Posterior vena cava (tissue), 2 donors: ENCODE measurements at regions of chr1 and their contacts with region 1.

Region 1: DNA sequence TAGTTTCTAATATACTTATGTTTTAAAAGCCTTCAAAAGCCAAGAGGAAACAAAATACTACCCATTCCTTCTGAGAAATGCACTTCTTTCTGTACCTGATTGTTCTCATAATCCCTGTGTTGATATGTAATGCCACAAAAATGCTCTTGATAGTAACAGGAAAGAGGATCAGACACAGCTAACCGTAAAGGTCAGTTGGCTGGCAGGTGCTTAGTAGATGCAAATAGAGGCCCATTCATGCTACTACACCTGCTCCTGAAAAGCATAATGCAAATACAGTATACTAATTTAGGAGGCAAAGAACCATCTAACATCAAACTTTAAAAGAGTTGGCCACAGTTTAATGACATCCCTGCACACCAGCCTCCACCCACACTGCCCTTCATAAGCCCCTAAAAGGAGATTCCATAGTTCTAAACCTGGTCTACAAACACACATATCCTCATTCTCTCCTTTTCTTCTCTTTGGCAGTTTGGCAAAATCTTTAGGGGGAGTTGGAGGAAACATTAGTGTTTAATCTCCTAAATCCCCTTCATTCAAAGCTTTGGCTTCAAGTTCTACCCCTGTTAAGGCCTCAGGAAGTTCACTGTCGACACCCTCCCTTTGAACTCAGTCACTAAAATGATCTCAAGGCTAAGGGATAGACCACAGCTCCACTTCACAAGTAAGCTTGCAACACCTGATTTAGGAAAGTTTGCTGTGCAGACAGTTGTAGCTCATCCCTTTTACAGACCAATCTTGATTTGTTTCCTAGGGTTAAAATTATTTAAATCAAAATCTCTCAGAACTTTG is 2.9 kb upstream of the CD46 start:
- DNase-seq: no peak

Region 2: GRCh38 chr1:206839857-206840256 is 909.1 kb before region 1 on chr1:
- intact Hi-C with region 1: loop called in 1 of 2 experiments (anchors 5 kb)
- DNase-seq: no peak